CD8-positive, alpha-beta T cell (primary cell): ENCODE measurements at regions of chr19 and their contacts with region 1.

Region 1: GRCh38 chr19:10580979-10581631 is 6.0 kb downstream of the AP1M2 start:
- DNase-seq: peak; percentile 81 to 93 (median 92)
- ATAC-seq: peak; percentile 100
- H3K4me3 ChIP-seq: no peak overlapping the region
- H3K4me3 Mint-ChIP-seq: no peak overlapping the region
- H3K27ac ChIP-seq: no peak overlapping the region
- H3K27ac Mint-ChIP-seq: no peak overlapping the region
- H3K4me1 ChIP-seq: peaks cover 4% of the 10 kb centered on the region
- H3K4me1 Mint-ChIP-seq: peaks cover 11% of the 10 kb centered on the region
- H3K27me3 ChIP-seq: no peaks in the 10 kb centered on the region
- H3K27me3 Mint-ChIP-seq: no peaks in the 10 kb centered on the region
- CTCF ChIP-seq: peak; percentile 99

Region 2: DNA sequence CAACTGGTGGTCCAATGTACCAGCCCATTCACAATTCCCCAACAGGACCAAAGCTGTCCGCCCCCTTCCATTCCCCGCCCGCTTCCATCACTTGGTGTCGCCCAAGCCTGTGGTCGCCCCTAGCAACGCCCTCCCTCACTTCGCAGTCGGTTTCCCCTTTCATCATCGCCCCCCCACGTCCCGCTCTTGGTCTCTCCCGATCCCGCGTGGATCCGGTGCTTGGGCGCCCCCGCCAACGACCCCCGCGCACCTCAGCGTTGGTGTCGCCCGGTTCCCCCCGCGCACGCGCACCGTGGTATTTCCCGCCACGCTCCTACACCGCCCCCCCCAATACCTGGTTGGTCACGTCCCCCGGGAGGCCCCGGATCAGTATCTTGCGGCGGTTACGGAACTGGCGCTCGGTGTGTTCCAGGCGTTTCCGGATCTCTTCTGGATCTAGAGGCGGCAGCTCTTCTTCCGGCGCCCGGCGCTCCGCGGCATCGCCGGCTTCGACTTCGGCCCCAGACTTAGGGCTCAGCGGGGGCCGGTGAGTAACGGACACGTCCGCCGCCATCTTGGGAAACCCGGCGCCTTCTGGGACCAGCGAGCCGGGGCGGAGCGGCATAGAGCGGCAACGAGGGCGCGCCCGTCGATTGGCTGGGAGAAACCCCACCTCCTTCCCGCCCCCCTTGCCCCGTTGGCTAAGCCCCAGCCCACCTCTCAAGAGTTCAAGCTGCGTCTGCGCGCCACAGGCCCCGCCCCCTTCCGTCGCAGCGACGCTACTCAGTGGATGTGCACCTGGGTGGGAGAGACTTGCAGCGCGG is 247.9 kb before region 1 on chr19 and contains the start of gene RAVER1:
- CTCF ChIA-PET with region 1: no interaction called
- POLR2A ChIA-PET with region 1: no interaction called
- intact Hi-C with region 1: no loop called
- DNase-seq: peak; percentile 94 to 99 (median 98)
- ATAC-seq: peak; percentile 96
- H3K4me3 ChIP-seq: peak within 1 kb of the TSS; percentile 93 to 97
- H3K4me3 Mint-ChIP-seq: peak within 1 kb of the TSS; percentile 95
- H3K27ac ChIP-seq: peak within 1 kb of the TSS; percentile 76 to 95
- H3K27ac Mint-ChIP-seq: peak within 1 kb of the TSS; percentile 93
- H3K4me1 ChIP-seq: peaks cover 30% of the 10 kb centered on the region
- H3K4me1 Mint-ChIP-seq: peaks cover 35% of the 10 kb centered on the region
- H3K27me3 ChIP-seq: no peaks in the 10 kb centered on the region
- H3K27me3 Mint-ChIP-seq: no peaks in the 10 kb centered on the region
- CTCF ChIP-seq: no peak
- total RNA-seq, gene RAVER1: 33.3 to 33.6 TPM

Region 3: GRCh38 chr19:10353793-10354391 is 227.2 kb before region 1 on chr19:
- CTCF ChIA-PET with region 1: no interaction called
- POLR2A ChIA-PET with region 1: no interaction called
- intact Hi-C with region 1: no loop called
- DNase-seq: peak in 4 of 9 experiments; percentile 31 to 56 (median 52)
- ATAC-seq: peak; percentile 71
- H3K4me3 ChIP-seq: no peak overlapping the region
- H3K4me3 Mint-ChIP-seq: no peak overlapping the region
- H3K27ac ChIP-seq: no peak overlapping the region
- H3K27ac Mint-ChIP-seq: no peak overlapping the region
- H3K4me1 ChIP-seq: no peaks in the 10 kb centered on the region
- H3K4me1 Mint-ChIP-seq: no peaks in the 10 kb centered on the region
- H3K27me3 ChIP-seq: no peaks in the 10 kb centered on the region
- H3K27me3 Mint-ChIP-seq: no peaks in the 10 kb centered on the region
- CTCF ChIP-seq: no peak

Region 4: GRCh38 chr19:10471909-10472308 is 109.2 kb before region 1 on chr19:
- CTCF ChIA-PET with region 1: no interaction called
- POLR2A ChIA-PET with region 1: no interaction called
- intact Hi-C with region 1: no loop called
- DNase-seq: peak in 2 of 9 experiments; percentile 44 to 65
- ATAC-seq: peak; percentile 64
- H3K4me3 ChIP-seq: no peak overlapping the region
- H3K4me3 Mint-ChIP-seq: no peak overlapping the region
- H3K27ac ChIP-seq: no peak overlapping the region
- H3K27ac Mint-ChIP-seq: no peak overlapping the region
- H3K4me1 ChIP-seq: no peaks in the 10 kb centered on the region
- H3K4me1 Mint-ChIP-seq: peaks cover 2% of the 10 kb centered on the region
- H3K27me3 ChIP-seq: no peaks in the 10 kb centered on the region
- H3K27me3 Mint-ChIP-seq: peaks cover 3% of the 10 kb centered on the region
- CTCF ChIP-seq: peak; percentile 29

Region 5: DNA sequence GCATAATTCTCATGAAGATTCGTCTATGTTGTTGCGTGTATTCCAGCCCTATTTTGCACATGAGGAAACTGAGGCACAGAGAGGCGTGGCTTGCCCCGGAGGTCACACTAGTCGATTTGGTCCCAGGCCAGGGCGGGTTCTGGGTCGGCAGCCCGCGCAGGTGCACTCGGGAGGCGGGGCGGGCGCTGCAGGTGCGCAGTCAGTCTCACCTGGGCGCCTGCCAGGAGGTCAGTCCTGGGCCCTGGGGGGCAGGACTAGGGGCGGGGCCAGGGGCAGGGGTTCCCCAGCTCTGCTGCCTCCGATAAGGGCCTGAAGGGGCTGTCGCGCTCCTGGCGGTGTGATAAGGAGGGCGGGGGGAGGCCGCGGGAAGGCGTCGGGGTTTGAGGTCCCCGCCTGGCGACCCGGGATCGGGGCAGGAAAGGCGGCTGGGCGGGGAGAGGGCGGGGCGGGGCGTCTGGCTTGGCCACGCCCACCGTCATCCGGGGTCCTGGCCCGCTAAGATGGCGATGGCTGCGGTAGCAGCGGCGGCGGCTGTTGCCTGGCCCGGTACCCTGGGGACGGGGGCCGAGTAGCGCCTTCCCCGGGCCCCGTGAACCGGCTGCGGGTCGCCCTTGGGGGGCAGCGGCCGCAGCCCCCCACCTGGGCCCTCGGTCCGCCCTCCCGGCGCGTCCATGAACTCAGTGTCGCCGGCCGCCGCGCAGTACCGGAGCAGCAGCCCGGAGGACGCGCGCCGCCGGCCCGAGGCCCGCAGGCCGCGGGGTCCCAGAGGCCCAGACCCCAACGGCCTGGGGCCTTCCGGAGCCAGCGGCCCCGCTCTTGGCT is 37.5 kb before region 1 on chr19 and contains the start of gene ATG4D:
- CTCF ChIA-PET with region 1: interaction called, 22 read pairs
- POLR2A ChIA-PET with region 1: no interaction called
- intact Hi-C with region 1: no loop called
- DNase-seq: peak; percentile 66 to 91 (median 84)
- ATAC-seq: peak; percentile 86
- H3K4me3 ChIP-seq: peak within 1 kb of the TSS; percentile 82 to 90
- H3K4me3 Mint-ChIP-seq: peak within 1 kb of the TSS; percentile 88
- H3K27ac ChIP-seq: peak within 1 kb of the TSS; percentile 63 to 66
- H3K27ac Mint-ChIP-seq: peak within 1 kb of the TSS; percentile 91
- H3K4me1 ChIP-seq: peaks cover 17% of the 10 kb centered on the region
- H3K4me1 Mint-ChIP-seq: peaks cover 19% of the 10 kb centered on the region
- H3K27me3 ChIP-seq: no peaks in the 10 kb centered on the region
- H3K27me3 Mint-ChIP-seq: peaks cover 7% of the 10 kb centered on the region
- CTCF ChIP-seq: no peak
- total RNA-seq, gene ATG4D: 82.0 to 91.1 TPM

Region 6: DNA sequence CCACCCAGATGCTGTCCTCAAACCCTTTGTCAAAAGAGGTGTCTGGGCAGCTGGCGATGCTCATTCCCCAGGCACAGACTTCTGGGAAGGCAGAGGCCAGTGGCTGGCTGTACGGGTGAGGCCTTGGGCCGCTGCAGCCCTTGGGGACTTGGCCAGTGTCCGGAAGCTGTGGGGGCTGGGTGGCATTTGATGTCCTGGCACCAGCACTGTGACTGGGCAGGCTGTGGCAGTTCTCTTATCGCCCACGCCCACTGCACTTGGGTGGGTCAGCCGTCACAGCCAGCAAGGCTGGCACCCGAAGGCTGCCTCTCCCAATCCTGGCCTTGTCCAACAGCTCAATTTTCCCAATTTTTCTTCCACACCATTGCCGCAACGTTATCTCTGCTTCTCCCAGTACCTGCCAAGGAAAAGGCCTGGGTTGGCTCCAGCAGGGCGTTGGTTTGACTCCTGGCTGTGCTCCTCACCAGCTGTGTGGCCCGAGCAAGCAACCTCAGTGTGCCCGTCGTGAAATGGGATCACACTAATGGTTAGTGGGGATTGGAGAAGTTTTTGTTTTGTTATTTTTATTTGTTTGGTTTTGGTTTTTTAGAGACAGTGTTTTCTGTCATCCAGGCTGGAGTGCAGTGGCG is 31.5 kb after region 1 on chr19:
- CTCF ChIA-PET with region 1: interaction called, 23 read pairs
- POLR2A ChIA-PET with region 1: interaction called, 5 read pairs
- intact Hi-C with region 1: no loop called
- DNase-seq: no peak
- ATAC-seq: no peak
- H3K4me3 ChIP-seq: no peak overlapping the region
- H3K4me3 Mint-ChIP-seq: no peak overlapping the region
- H3K27ac ChIP-seq: no peak overlapping the region
- H3K27ac Mint-ChIP-seq: peak overlapping the region; percentile 67
- H3K4me1 ChIP-seq: peaks cover 37% of the 10 kb centered on the region
- H3K4me1 Mint-ChIP-seq: peaks cover 48% of the 10 kb centered on the region
- H3K27me3 ChIP-seq: no peaks in the 10 kb centered on the region
- H3K27me3 Mint-ChIP-seq: no peaks in the 10 kb centered on the region
- CTCF ChIP-seq: no peak

Region 7: GRCh38 chr19:10644260-10645007 is 63.3 kb after region 1 on chr19:
- CTCF ChIA-PET with region 1: interaction called, 611 read pairs
- POLR2A ChIA-PET with region 1: interaction called, 40 read pairs
- intact Hi-C with region 1: loop called (anchors 1 kb)
- DNase-seq: peak; percentile 76 to 92 (median 87)
- ATAC-seq: peak; percentile 90
- H3K4me3 ChIP-seq: no peak overlapping the region
- H3K4me3 Mint-ChIP-seq: peak overlapping the region; percentile 22
- H3K27ac ChIP-seq: peak overlapping the region in 1 of 2 experiments; percentile 65
- H3K27ac Mint-ChIP-seq: peak overlapping the region; percentile 92
- H3K4me1 ChIP-seq: peaks cover 39% of the 10 kb centered on the region
- H3K4me1 Mint-ChIP-seq: peaks cover 43% of the 10 kb centered on the region
- H3K27me3 ChIP-seq: no peaks in the 10 kb centered on the region
- H3K27me3 Mint-ChIP-seq: no peaks in the 10 kb centered on the region
- CTCF ChIP-seq: peak; percentile 84

Region 8: GRCh38 chr19:10695401-10696398 is 114.6 kb after region 1 on chr19:
- CTCF ChIA-PET with region 1: interaction called, 119 read pairs
- POLR2A ChIA-PET with region 1: no interaction called
- intact Hi-C with region 1: loop called in 1 of 2 experiments (anchors 1 kb)
- DNase-seq: peak; percentile 77 to 94 (median 87)
- ATAC-seq: peak; percentile 97
- H3K4me3 ChIP-seq: peak overlapping the region; percentile 33 to 58
- H3K4me3 Mint-ChIP-seq: peak overlapping the region; percentile 78
- H3K27ac ChIP-seq: no peak overlapping the region
- H3K27ac Mint-ChIP-seq: no peak overlapping the region
- H3K4me1 ChIP-seq: peaks cover 12% of the 10 kb centered on the region
- H3K4me1 Mint-ChIP-seq: peaks cover 17% of the 10 kb centered on the region
- H3K27me3 ChIP-seq: peaks cover 0 to 2% of the 10 kb centered on the region in 2 experiments
- H3K27me3 Mint-ChIP-seq: peaks cover 5% of the 10 kb centered on the region
- CTCF ChIP-seq: no peak